ENCODE measurements at regions of chr14 and their contacts with region 1.

Region 1: DNA sequence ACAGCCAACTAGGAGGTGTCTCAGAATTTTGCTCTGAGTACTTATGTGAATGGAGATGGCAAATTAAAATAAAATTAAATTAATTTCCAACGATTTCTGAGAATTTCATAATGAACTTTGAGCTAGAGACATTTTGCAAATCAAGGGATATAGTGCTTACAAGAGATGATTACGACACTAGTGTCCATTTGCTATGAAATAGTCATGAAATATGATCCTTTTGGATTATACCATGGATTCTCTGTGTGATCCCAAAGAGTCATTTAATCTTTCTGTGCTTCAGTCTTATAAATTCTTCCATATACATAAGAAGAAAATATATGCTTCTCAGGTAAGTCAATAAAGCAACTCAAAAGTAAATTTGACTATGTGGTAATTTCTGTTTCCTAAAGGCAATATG is 240.6 kb downstream of the SLC25A21 start:
- DNase-seq: no peak
- ATAC-seq: no peak
- H3K4me3 ChIP-seq: no peak overlapping the region
- H3K27ac ChIP-seq: no peak overlapping the region
- H3K4me1 ChIP-seq: peaks cover 14% of the 10 kb centered on the region; the same call in 2 of the 3 replicates
- CTCF ChIP-seq: no peak
- EP300 ChIP-seq: no peak
- POLR2A ChIP-seq: no peak
- RAD21 ChIP-seq: no peak

Region 2: DNA sequence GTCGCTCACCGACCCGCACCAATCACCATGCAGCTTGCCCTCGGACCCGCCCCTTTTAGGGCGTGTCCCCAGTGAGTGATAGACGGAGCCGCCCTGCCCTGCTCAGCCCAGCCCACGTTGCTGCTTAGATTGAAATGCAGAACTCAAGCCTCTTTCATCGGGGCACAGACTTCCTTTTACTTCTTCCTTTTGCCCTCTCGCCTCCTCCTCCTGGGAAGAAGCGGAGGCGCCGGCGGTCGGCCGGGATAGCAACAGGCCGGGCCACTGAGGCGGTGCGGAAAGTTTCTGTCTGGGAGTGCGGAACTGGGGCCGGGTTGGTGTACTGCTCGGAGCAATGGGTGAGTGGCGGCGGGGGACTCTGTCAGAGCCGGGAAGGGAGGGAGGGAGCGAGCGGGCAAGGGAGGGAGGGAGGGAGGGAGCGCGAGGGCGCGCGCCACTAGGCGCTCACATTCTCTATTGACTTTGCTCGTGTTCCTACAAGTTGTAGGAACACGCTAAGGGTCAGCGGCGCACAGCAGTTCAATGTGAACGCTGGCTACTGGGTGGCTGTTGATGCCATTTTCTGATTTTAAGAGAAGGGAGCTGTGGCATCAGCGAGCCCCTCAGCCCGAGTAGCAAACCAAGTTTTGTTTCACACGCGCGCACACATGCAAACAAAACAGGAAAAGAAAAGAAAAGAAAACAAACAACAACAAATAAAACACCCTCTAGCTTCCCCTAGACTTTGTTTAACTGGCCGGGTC is 269.9 kb before region 1 on chr14 and contains the start of gene PAX9:
- CTCF ChIA-PET with region 1: interaction called, 4 read pairs
- POLR2A ChIA-PET with region 1: interaction called, 10 read pairs
- DNase-seq: peak; percentile 88 to 91
- ATAC-seq: peak; percentile 92 to 98
- H3K4me3 ChIP-seq: peak within 1 kb of the TSS; percentile 66
- H3K27ac ChIP-seq: peak within 1 kb of the TSS; percentile 71 to 84
- H3K4me1 ChIP-seq: peaks cover 6% of the 10 kb centered on the region; the same call in 1 of the 3 replicates
- CTCF ChIP-seq: no peak
- EP300 ChIP-seq: no peak
- POLR2A ChIP-seq: peak; percentile 22; the same call in 1 of the 2 replicates
- RAD21 ChIP-seq: no peak
- polyA plus RNA-seq, gene PAX9: 1.4 and 1.8 TPM in 2 replicates